ENCODE measurements at regions of chr1 and their contacts with region 1.

Region 1: DNA sequence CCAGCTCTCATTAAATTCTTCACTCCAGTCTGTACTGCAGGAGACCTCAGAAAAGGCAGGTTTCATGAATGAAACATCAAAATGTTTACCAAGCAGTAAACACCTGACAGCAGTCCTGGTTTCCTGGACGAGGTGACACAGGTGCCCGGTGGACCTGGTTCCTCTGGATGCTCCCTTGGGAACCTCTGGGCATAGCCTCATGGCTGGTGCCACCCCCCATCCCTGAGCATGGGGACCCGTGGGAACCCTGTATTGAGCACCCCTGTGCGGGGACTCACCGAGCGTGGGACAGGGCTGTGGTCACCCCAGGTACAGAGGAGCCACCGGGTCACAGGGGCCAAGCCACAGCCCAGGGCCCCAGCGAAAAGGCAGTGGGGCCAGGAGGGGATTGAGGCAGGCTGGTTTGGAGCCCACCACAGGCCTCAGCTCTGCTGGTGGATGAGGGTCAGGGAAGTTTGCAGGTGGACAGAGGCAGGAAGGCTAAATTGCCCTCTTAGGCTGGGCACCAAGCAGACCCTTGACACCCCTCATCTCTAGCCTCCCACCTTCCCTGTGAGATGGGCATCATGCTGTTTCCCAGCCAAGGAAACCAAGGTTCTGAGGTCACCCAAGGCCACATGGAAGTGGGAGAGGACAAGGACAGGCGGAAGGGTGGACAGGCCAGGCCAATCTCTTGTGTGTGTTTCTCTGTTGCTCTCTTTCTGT is 158.4 kb downstream of the PTPRU start:
- DNase-seq: no peak
- ATAC-seq: no peak

Region 2: GRCh38 chr1:28956038-28956464 is 438.6 kb before region 1 on chr1:
- intact Hi-C with region 1: no loop called
- DNase-seq: no peak
- ATAC-seq: no peak

Region 3: GRCh38 chr1:30407865-30408580 is 1013.4 kb after region 1 on chr1:
- intact Hi-C with region 1: loop called (anchors 5 kb)
- DNase-seq: no peak
- ATAC-seq: peak; percentile 23